ENCODE measurements at regions of chr2 and their contacts with region 1.

Region 1: GRCh38 chr2:231925303-231926179 is 655 bp downstream of the NPPC start:
- DNase-seq: peak; percentile 72
- H3K4me3 Mint-ChIP-seq: peak overlapping the region; percentile 73
- H3K27ac Mint-ChIP-seq: no peak overlapping the region
- H3K4me1 Mint-ChIP-seq: peaks cover 9% of the 10 kb centered on the region
- H3K27me3 Mint-ChIP-seq: peaks cover 44% of the 10 kb centered on the region

Region 2: DNA sequence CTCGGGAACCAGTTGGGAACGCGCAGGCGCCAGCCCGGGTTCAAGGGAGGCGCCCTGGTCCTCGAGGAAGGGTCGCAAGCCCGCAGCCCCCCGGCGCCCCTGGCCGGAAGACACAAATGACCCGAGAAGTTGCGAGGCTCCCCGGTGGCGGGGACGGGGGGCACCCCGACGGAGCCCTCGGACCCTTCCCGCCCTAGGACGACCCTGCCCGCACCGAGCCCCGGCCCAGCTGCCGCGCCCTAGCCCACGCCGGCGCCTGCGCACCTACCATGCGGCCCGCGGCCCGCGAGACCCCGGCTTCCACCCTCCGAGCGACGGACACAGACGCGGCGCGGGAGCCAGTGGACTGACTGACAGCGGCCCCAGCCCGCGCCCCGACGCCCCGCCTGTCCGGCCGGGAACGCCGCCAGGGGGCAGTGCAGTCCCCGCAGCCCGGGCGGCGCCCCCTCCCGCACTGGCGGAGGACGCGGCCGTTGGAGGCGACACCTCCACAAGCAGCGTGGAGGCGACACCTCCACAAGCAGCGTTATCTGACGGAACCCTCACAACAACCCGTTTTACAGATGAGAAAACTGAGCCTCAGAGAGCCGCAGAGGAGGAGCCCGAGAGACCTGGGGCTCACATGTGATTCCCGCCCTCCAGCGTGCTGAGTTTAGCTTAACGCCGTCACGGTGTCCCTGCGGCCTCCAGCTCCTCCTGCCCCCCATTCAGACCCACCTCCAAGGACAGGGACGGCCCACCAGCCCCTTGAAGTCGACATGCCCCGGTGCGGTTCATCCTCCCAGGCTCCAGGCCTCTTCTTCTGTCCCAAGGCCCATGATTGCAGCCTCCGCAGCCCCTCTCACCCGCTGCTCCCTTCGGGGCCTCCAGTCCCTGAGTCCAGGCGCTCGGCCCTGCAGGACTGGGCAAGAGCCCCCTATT is 395.2 kb before region 1 on chr2 and contains the start of gene NMUR1:
- CTCF ChIA-PET with region 1: no interaction called
- intact Hi-C with region 1: no loop called
- DNase-seq: peak; percentile 59
- H3K4me3 Mint-ChIP-seq: peak within 1 kb of the TSS; percentile 3
- H3K27ac Mint-ChIP-seq: no peak within 1 kb of the TSS
- H3K4me1 Mint-ChIP-seq: peaks cover 5% of the 10 kb centered on the region
- H3K27me3 Mint-ChIP-seq: peaks cover 15% of the 10 kb centered on the region
- total RNA-seq, gene NMUR1: not detected

Region 3: DNA sequence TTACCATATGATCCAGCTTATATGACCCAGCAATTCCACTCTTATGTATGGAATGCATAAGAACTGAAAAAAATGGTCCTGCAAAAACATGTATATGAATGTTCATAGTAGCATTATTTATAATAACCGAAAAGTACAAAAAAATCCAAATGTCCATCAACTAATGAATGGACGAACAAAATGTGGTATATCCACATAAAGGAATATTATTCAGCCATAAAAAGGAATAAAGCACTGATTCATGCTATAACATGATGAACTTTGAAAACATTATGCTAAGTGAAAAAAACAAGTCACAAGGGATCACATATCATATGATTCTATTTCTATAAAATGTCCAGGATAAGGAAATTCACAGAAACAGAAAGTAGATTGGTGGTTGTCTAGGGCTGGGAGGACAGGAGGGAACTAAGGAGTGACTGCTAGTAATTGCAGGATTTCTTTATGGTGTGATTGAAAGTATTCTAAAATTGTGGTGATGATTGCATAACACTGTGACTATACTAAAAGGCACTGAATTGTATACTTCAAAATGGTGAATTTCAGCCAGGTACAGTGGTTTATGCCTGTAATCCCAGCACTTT is 26.0 kb after region 1 on chr2:
- CTCF ChIA-PET with region 1: no interaction called
- intact Hi-C with region 1: no loop called
- DNase-seq: no peak
- H3K4me3 Mint-ChIP-seq: no peak overlapping the region
- H3K27ac Mint-ChIP-seq: no peak overlapping the region
- H3K4me1 Mint-ChIP-seq: no peaks in the 10 kb centered on the region
- H3K27me3 Mint-ChIP-seq: peaks cover 6% of the 10 kb centered on the region

Region 4: GRCh38 chr2:232142049-232142448 is 216.5 kb after region 1 on chr2:
- CTCF ChIA-PET with region 1: interaction called, 49 read pairs
- intact Hi-C with region 1: loop called (anchors 1 kb)
- DNase-seq: peak; percentile 65
- H3K4me3 Mint-ChIP-seq: no peak overlapping the region
- H3K27ac Mint-ChIP-seq: no peak overlapping the region
- H3K4me1 Mint-ChIP-seq: peaks cover 37% of the 10 kb centered on the region
- H3K27me3 Mint-ChIP-seq: no peaks in the 10 kb centered on the region

Region 5: DNA sequence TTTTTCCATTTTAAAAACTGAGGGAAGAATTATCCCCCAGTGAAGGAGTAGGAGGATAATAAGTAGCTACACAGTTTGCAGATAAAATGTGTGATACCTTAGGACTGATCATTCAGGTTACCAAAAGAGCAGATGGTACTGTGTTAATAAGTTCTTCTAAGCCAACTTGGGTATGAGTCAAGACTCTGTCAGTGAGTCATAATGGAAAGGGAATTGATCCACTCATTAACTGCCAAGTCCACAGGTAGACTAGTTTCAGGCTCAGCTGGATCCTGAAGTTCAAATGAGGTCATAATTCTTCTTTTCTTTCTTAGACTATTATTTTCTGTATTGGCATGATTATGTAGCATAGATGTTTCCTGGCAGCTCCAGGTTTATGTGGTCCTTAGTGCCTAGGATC is 310.7 kb after region 1 on chr2:
- CTCF ChIA-PET with region 1: interaction called, 12 read pairs
- intact Hi-C with region 1: no loop called
- DNase-seq: no peak
- H3K4me3 Mint-ChIP-seq: no peak overlapping the region
- H3K27ac Mint-ChIP-seq: no peak overlapping the region
- H3K4me1 Mint-ChIP-seq: peaks cover 74% of the 10 kb centered on the region
- H3K27me3 Mint-ChIP-seq: no peaks in the 10 kb centered on the region

Region 6: DNA sequence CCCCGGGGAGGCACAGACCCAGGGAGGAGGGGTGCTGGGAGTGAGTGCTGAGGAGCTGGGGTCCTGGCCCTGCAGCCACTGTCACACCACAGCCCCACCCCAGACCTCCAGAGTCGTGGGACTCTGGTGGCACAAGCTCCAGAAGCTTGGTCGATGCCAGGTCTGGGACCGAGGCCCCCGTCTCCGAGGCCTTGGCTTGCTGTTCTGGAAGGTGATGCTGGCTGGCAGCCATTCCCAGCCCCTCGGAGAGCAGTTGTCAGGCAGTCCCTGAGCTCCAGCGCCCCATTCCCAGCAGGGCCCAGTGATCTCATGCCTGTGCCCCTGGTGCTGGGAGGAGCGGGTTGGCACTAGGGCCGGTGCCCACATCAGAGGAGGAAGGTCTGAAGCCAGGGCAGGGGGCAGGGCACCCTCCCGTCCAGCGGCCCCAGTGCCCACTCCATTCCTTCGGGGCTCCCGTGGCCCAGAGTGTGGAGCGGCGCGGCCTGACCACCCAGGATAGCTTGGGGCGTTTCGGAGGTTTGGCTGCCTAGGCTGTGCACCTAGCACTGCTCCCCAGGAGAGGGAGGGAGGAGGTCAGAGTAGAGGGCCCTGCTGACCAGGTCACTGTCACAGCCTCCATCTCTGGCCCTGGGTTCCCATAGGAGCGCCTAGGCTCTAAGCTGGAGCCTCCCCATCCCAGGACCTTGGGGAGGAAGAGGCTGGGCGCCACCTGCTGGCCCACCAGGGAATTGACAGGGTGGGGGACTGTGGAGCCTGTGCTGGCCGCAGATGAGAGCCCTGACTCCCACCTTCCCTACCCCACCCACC is 513.6 kb after region 1 on chr2:
- CTCF ChIA-PET with region 1: interaction called, 4 read pairs
- intact Hi-C with region 1: loop called (anchors 1 kb)
- DNase-seq: peak; percentile 54
- H3K4me3 Mint-ChIP-seq: no peak overlapping the region
- H3K27ac Mint-ChIP-seq: no peak overlapping the region
- H3K4me1 Mint-ChIP-seq: peaks cover 6% of the 10 kb centered on the region
- H3K27me3 Mint-ChIP-seq: no peaks in the 10 kb centered on the region